ENCODE measurements at regions of chrX and their contacts with region 1.

Region 1: GRCh38 chrX:13235930-13236329 is 83.9 kb downstream of the ATXN3L start:
- DNase-seq: no peak

Region 2: GRCh38 chrX:13200398-13200797 is 35.5 kb before region 1 on chrX:
- intact Hi-C with region 1: loop called in 1 of 2 experiments (anchors 1 kb)
- DNase-seq: no peak

Region 3: DNA sequence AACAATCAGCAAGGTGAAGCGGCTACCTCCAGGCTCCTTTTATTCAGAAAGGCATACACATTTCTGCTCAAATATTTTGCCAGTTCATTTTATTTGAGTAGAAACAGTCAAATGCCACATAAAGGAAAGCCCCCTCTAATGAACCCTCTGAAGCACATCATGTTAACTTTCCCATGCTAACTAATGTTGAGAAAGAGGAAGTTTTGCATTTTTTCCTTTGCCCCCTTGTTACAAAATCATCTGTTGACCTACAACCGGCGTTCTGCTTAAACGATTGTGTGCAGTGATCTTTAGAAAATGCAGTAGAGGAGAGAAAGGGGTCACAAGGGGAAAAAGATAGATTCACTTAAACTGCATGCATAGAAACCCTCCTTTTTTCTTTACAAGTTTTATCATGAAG is 109.1 kb after region 1 on chrX:
- intact Hi-C with region 1: no loop called
- DNase-seq: no peak

Measured in posterior vena cava (tissue), 2 donors.